Spleen (tissue), 13 donors: ENCODE measurements at regions of chr3 and their contacts with region 1.

Region 1: GRCh38 chr3:120095226-120095978 is 1.2 kb upstream of the GSK3B start:
- DNase-seq: peak; percentile 97
- H3K4me3 ChIP-seq: peak overlapping the region; percentile 59 to 91 (median 82)
- H3K27ac ChIP-seq: peak overlapping the region; percentile 99 to 100 (median 100)
- H3K4me1 ChIP-seq: peaks cover 16 to 57% (median 32%) of the 10 kb centered on the region in 6 donors
- H3K27me3 ChIP-seq: no peaks in the 10 kb centered on the region
- CTCF ChIP-seq: peak in 1 of 11 experiments; percentile 6
- POLR2A ChIP-seq: peak; percentile 29 to 84 (median 79)

Region 2: GRCh38 chr3:119463171-119464169 is 631.9 kb before region 1 on chr3 and contains the start of gene TMEM39A:
- intact Hi-C with region 1: loop called (anchors 10 kb)
- DNase-seq: peak; percentile 100
- H3K4me3 ChIP-seq: peak within 1 kb of the TSS; percentile 74 to 89 (median 82)
- H3K27ac ChIP-seq: peak within 1 kb of the TSS; percentile 86 to 95 (median 90)
- H3K4me1 ChIP-seq: peaks cover 16 to 60% (median 51%) of the 10 kb centered on the region in 6 donors
- H3K27me3 ChIP-seq: no peaks in the 10 kb centered on the region
- CTCF ChIP-seq: peak in 10 of 11 experiments; percentile 19 to 60 (median 48)
- POLR2A ChIP-seq: peak; percentile 89 to 94 (median 92)
- total RNA-seq, gene TMEM39A: 36.0 to 80.5 (median 42.3) TPM

Region 3: GRCh38 chr3:119808244-119808643 is 287.2 kb before region 1 on chr3:
- intact Hi-C with region 1: no loop called
- DNase-seq: no peak
- H3K4me3 ChIP-seq: no peak overlapping the region
- H3K27ac ChIP-seq: no peak overlapping the region
- H3K4me1 ChIP-seq: peaks cover 4 to 19% (median 14%) of the 10 kb centered on the region in 6 donors
- H3K27me3 ChIP-seq: no peaks in the 10 kb centered on the region
- CTCF ChIP-seq: no peak
- POLR2A ChIP-seq: no peak

Region 4: GRCh38 chr3:119891944-119892721 is 203.3 kb before region 1 on chr3:
- intact Hi-C with region 1: loop called (anchors 10 kb)
- DNase-seq: no peak
- H3K4me3 ChIP-seq: no peak overlapping the region
- H3K27ac ChIP-seq: peak overlapping the region in 1 of 8 donors; percentile 6
- H3K4me1 ChIP-seq: peaks cover 0 to 13% (median 9%) of the 10 kb centered on the region in 6 donors
- H3K27me3 ChIP-seq: no peaks in the 10 kb centered on the region
- CTCF ChIP-seq: peak; percentile 9 to 66 (median 54)
- POLR2A ChIP-seq: no peak

Region 5: GRCh38 chr3:120203016-120203415 is 107.6 kb after region 1 on chr3:
- intact Hi-C with region 1: loop called (anchors 10 kb)
- DNase-seq: no peak
- H3K4me3 ChIP-seq: peak overlapping the region in 1 of 8 donors; percentile 11
- H3K27ac ChIP-seq: peak overlapping the region; percentile 62 to 84 (median 73)
- H3K4me1 ChIP-seq: peaks cover 0 to 41% (median 18%) of the 10 kb centered on the region in 6 donors
- H3K27me3 ChIP-seq: no peaks in the 10 kb centered on the region
- CTCF ChIP-seq: no peak
- POLR2A ChIP-seq: no peak

Region 6: GRCh38 chr3:120311863-120312794 is 216.7 kb after region 1 on chr3:
- intact Hi-C with region 1: no loop called
- DNase-seq: no peak
- H3K4me3 ChIP-seq: no peak overlapping the region
- H3K27ac ChIP-seq: no peak overlapping the region
- H3K4me1 ChIP-seq: no peaks in the 10 kb centered on the region
- H3K27me3 ChIP-seq: peaks cover 0 to 1% (median 0%) of the 10 kb centered on the region in 7 donors
- CTCF ChIP-seq: no peak
- POLR2A ChIP-seq: no peak

Region 7: GRCh38 chr3:120404876-120405275 is 309.5 kb after region 1 on chr3:
- intact Hi-C with region 1: loop called (anchors 5 kb)
- DNase-seq: no peak
- H3K4me3 ChIP-seq: no peak overlapping the region
- H3K27ac ChIP-seq: no peak overlapping the region
- H3K4me1 ChIP-seq: no peaks in the 10 kb centered on the region
- H3K27me3 ChIP-seq: no peaks in the 10 kb centered on the region
- CTCF ChIP-seq: no peak
- POLR2A ChIP-seq: no peak